ENCODE measurements at regions of chr5 and their contacts with region 1.

Region 1: GRCh38 chr5:149035372-149035790 is 27.5 kb downstream of the SH3TC2 start:
- DNase-seq: peak; percentile 92

Region 2: GRCh38 chr5:148443998-148444397 is 591.4 kb before region 1 on chr5:
- intact Hi-C with region 1: loop called in 1 of 2 experiments (anchors 10 kb)
- DNase-seq: no peak

Region 3: GRCh38 chr5:148730943-148731861 is 304.2 kb before region 1 on chr5:
- intact Hi-C with region 1: loop called in 1 of 2 experiments (anchors 2 kb)
- DNase-seq: no peak

Region 4: GRCh38 chr5:148740966-148741742 is 294.2 kb before region 1 on chr5:
- intact Hi-C with region 1: loop called in 1 of 2 experiments (anchors 10 kb)
- DNase-seq: no peak

Region 5: GRCh38 chr5:148820461-148821395 is 214.7 kb before region 1 on chr5:
- intact Hi-C with region 1: loop called in 1 of 2 experiments (anchors 5 kb)
- DNase-seq: no peak

Region 6: GRCh38 chr5:148988328-148988727 is 47.1 kb before region 1 on chr5:
- intact Hi-C with region 1: no loop called
- DNase-seq: no peak

Region 7: GRCh38 chr5:149011074-149011476 is 24.3 kb before region 1 on chr5:
- intact Hi-C with region 1: no loop called
- DNase-seq: no peak

Region 8: GRCh38 chr5:149074106-149074505 is 38.7 kb after region 1 on chr5:
- intact Hi-C with region 1: no loop called
- DNase-seq: no peak

Region 9: GRCh38 chr5:149094981-149095380 is 59.6 kb after region 1 on chr5:
- intact Hi-C with region 1: loop called in 1 of 2 experiments (anchors 2 kb)
- DNase-seq: no peak

Region 10: DNA sequence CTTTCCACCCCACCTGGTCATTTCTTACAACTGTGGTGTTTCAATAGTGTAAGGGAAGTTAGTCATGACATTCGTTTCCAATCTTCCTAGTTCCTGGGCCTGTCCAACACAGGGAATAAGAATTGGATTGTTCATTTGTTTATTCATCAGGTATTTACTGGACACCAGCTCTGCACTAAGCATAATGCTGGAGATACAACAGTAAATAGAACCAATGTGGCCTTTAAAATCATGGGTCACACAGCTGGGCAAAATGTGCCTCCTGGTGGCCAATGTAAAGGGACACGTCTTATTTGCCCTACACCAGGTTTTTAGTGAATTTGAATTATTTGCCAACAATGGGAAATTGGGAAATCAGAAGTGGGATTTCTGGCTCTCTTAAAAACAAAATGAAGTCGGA is 116.3 kb after region 1 on chr5:
- intact Hi-C with region 1: no loop called
- DNase-seq: no peak

Measured in posterior vena cava (tissue), 2 donors.